ENCODE measurements at regions of chr2 and their contacts with region 1.

Region 1: GRCh38 chr2:191114403-191114886 is 36.3 kb downstream of the STAT4 start:
- DNase-seq: peak; percentile 82
- H3K4me3 Mint-ChIP-seq: peak overlapping the region; percentile 60
- H3K27ac Mint-ChIP-seq: peak overlapping the region; percentile 92
- H3K4me1 Mint-ChIP-seq: peaks cover 55% of the 10 kb centered on the region
- H3K27me3 Mint-ChIP-seq: no peaks in the 10 kb centered on the region

Region 2: DNA sequence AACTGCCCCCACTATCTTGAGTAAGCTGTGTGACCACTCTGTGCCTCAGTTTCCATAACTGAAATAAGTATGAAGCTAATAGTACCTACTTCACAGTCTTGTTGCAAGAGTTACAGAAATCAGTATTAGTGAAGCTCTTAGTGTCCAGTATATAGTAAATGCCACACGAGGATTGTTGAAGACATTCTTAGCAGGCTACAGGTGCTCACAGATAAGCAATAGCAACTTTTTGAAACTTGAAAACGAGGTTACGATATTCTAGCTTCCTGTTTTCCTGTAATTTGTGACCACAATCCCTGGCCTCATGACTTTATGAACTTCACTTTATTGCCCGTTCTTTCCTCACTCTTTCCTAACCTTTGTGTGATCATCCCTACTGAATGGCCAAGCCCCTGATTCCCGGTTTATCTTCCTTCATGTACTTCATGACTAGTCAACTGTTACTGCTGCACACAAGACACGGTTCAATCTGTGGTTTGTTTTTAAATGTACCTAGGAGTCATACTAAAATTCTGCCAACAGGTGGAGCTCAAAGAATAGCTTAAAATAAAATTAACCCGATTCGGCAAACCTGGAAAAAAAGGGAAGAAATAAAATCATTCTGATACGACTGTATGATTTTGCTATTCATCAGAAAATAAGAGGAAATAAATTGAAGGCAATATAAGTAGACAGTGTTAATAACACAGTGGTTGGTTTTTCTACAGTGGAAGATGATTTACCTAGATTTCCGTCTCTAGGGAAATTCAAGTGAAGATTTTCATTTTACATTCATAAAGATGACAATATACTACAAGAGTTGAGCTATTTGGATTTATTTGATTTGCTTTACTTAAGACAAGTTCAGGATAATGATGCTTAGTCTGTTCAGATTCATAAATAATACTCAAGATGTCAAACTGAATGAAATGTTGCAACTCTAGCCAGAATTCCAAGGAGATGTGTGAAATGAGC is 62.3 kb before region 1 on chr2:
- intact Hi-C with region 1: loop called (anchors 2 kb)
- DNase-seq: peak; percentile 80
- H3K4me3 Mint-ChIP-seq: no peak overlapping the region
- H3K27ac Mint-ChIP-seq: no peak overlapping the region
- H3K4me1 Mint-ChIP-seq: peaks cover 22% of the 10 kb centered on the region
- H3K27me3 Mint-ChIP-seq: no peaks in the 10 kb centered on the region

Region 3: DNA sequence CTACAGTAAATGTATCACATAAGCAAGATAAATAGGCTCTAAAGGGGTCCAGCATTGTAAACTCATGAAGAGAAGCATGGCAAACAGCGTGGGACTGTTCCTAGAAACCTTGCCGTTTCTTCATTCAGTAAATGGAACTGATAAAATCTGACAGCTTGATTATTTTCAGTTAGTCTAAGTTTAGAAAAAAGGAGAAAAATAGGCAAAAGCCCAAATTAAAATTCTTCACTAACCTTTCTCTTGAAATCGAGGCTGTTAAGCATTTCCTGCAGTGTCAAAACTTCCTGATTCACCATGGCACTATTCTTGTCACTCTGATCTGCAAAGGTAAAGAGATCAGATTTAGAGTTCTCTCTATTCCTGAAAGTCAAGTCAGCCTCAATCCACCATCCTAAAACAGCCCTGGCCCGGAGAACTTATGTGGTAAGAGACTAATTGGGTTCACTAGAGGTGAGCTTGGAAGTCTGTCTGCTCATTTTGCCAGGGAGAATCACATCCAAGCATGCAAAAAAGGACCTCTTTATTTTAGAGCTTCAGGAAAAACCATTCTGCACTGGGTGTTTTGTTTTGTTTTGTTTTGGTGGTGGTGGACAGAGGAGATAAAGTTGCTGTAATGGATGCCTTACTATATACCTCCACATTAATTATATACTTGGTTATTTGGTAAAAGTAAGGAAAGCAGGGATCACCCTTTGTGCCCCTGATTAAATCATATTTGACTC is 48.1 kb before region 1 on chr2:
- intact Hi-C with region 1: loop called (anchors 1 kb)
- DNase-seq: peak; percentile 75
- H3K4me3 Mint-ChIP-seq: peak overlapping the region; percentile 88
- H3K27ac Mint-ChIP-seq: peak overlapping the region; percentile 92
- H3K4me1 Mint-ChIP-seq: peaks cover 76% of the 10 kb centered on the region
- H3K27me3 Mint-ChIP-seq: no peaks in the 10 kb centered on the region

Region 4: DNA sequence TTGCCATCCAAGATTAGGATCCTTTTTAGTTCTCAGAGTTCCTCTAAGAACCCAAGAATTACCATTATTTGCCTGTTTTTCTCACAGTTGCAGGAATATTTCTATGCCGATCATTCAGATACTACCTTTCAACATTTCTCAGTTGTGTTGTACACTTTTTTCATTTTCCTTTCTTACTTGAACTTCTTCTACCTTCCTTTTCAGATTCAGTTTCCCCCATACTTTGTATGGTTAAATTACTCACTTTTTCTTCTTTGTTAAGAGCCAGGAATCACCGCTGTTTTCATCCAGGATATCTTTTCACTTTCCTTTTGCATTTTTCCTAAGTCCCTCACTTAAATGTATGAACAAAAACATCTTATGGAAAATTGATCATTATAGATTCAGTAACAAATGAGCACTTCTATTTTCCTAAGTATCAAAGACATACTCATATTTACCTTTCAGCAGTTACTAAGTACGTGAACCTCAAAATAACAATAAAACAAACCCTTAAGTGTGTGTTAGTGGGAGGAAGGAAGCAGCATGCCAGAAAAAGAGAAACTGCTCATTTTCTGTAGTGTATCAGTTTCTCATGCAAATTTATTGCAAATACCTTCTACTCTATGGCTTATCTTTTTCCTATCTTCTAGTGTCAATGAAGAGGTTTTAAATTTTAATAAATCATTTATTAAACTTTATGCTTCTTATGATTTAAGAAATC is 36.1 kb before region 1 on chr2:
- intact Hi-C with region 1: loop called (anchors 1 kb)
- DNase-seq: no peak
- H3K4me3 Mint-ChIP-seq: peak overlapping the region; percentile 79
- H3K27ac Mint-ChIP-seq: peak overlapping the region; percentile 90
- H3K4me1 Mint-ChIP-seq: peaks cover 27% of the 10 kb centered on the region
- H3K27me3 Mint-ChIP-seq: no peaks in the 10 kb centered on the region

Region 5: DNA sequence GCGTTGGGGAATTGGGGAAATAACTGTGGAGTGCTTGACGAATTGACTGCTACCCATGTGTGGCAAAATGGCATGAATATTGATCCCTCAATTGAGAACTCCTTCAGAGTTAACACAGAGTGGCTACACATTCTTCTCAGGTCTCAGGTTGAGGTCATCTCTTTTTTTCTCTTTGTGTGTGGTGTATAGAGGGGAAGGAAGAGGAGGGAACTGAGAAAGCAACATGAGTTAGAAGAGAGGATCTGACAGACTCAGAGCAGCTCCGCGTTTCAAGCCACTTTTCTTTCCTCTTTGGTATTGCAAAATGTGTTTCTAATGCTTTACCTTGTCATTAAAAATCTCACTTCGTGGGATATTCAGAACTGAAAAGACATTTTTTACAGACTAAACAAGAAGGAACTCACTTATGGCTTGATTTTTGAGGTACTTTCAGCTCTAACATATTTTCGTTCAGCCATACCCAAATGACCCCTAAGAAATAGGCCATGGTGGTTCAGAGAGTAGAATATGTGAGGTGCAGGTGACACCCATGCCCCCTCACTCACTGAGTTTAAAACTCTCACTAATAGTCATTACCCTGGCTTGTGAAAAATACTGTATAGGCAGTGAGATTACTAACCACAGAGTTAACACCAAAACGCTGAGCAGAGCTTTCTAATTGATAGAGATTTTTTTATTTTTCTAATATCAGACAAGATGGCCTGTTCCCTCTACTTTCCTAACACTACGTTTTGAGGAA is 13.9 kb after region 1 on chr2:
- intact Hi-C with region 1: loop called (anchors 1 kb)
- DNase-seq: peak; percentile 63
- H3K4me3 Mint-ChIP-seq: peak overlapping the region; percentile 55
- H3K27ac Mint-ChIP-seq: peak overlapping the region; percentile 1
- H3K4me1 Mint-ChIP-seq: peaks cover 56% of the 10 kb centered on the region
- H3K27me3 Mint-ChIP-seq: no peaks in the 10 kb centered on the region

Region 6: GRCh38 chr2:191195021-191195420 is 80.6 kb after region 1 on chr2:
- intact Hi-C with region 1: loop called (anchors 2 kb)
- DNase-seq: peak; percentile 48
- H3K4me3 Mint-ChIP-seq: no peak overlapping the region
- H3K27ac Mint-ChIP-seq: peak overlapping the region; percentile 94
- H3K4me1 Mint-ChIP-seq: peaks cover 33% of the 10 kb centered on the region
- H3K27me3 Mint-ChIP-seq: no peaks in the 10 kb centered on the region